Activated B cell treated with CpG ODN at 0.5 μM for 24 hours (primary cell): ENCODE measurements at regions of chr11 and their contacts with region 1.

Region 1: DNA sequence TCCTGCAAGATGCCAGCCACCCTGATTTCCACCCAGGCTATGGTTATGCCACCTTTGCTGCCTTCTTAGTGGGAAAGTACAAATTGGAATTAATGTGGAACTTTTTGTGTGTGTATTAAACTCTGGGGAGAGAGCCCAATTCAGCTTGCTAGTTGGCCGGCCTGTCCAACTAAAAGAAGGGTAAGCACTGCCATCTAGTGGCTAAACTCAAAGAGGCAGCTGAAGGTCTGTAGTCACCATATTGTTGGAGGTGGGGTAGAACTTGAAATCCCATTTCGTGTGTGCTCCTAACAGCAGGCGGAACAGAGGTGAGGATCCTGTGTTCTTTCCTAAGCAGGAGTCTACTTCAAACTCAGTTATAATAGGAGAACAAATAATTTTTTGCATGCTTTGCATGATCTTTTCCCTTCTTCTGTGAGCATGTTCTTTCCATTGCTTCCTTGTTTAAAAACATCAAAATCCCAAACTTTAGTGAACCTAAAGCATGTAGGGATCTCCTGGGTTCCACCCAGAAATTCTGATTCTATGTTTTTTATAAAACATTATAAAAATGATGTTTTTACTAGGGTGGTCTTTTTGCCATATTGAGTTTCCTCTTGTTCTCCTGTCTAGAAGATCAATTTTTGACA is 138.8 kb upstream of the SORL1-AS1 start:
- DNase-seq: no peak
- ATAC-seq: peak; percentile 39
- H3K4me3 Mint-ChIP-seq: peak overlapping the region; percentile 49
- H3K27ac Mint-ChIP-seq: peak overlapping the region; percentile 93
- H3K4me1 Mint-ChIP-seq: peaks cover 36% of the 10 kb centered on the region
- H3K27me3 Mint-ChIP-seq: no peaks in the 10 kb centered on the region
- CTCF ChIP-seq: peak; percentile 77

Region 2: GRCh38 chr11:120511116-120511819 is 1080.3 kb before region 1 on chr11 and contains the start of gene GRIK4:
- CTCF ChIA-PET with region 1: interaction called, 5 read pairs
- POLR2A ChIA-PET with region 1: no interaction called
- intact Hi-C with region 1: loop called (anchors 1 kb)
- DNase-seq: peak; percentile 81
- ATAC-seq: peak; percentile 94
- H3K4me3 Mint-ChIP-seq: peak within 1 kb of the TSS; percentile 58
- H3K27ac Mint-ChIP-seq: no peak within 1 kb of the TSS
- H3K4me1 Mint-ChIP-seq: peaks cover 3% of the 10 kb centered on the region
- H3K27me3 Mint-ChIP-seq: peaks cover 51% of the 10 kb centered on the region
- CTCF ChIP-seq: peak; percentile 20
- total RNA-seq, gene GRIK4: 0.05 TPM in 1 of 2 replicates, not detected in the other

Region 3: GRCh38 chr11:121249039-121249663 is 342.4 kb before region 1 on chr11:
- CTCF ChIA-PET with region 1: interaction called, 11 read pairs
- POLR2A ChIA-PET with region 1: no interaction called
- intact Hi-C with region 1: loop called (anchors 1 kb)
- DNase-seq: no peak
- ATAC-seq: peak; percentile 73
- H3K4me3 Mint-ChIP-seq: no peak overlapping the region
- H3K27ac Mint-ChIP-seq: no peak overlapping the region
- H3K4me1 Mint-ChIP-seq: peaks cover 3% of the 10 kb centered on the region
- H3K27me3 Mint-ChIP-seq: peaks cover 4% of the 10 kb centered on the region
- CTCF ChIP-seq: peak; percentile 72

Region 4: DNA sequence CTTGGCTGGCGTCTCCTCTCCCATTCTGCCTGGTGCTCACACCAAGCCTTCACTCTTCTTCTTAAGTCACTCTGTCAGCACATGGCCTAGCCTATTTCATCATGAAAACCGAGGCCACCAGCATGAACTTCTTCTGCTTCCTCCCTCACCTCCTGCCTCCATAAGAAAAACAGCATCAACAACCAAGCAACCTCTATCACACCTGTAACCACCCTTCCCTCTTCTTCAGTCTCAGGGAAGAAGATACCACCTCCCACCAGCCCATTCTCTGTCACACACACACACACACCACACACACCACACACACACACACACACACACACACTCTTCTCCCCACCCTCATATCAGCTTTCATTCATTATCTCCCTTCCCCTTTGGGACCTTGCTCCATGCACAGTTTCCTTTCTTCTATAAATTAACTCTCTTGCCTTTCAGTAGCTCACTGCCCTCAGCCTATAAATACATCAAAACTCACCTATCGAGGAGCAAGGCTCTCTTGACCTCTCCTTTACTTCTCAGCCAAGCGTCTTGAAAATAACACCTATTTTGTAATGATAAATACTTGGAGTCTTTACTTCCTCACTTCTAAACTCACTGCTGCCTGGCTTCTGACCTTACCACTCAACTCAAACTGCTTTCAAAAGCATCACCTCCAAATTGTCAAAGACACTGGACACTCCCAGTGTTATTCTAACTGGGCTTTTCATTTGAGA is 262.4 kb before region 1 on chr11:
- CTCF ChIA-PET with region 1: interaction called, 12 read pairs
- POLR2A ChIA-PET with region 1: no interaction called
- intact Hi-C with region 1: no loop called
- DNase-seq: no peak
- ATAC-seq: peak; percentile 25
- H3K4me3 Mint-ChIP-seq: no peak overlapping the region
- H3K27ac Mint-ChIP-seq: no peak overlapping the region
- H3K4me1 Mint-ChIP-seq: peaks cover 3% of the 10 kb centered on the region
- H3K27me3 Mint-ChIP-seq: peaks cover 5% of the 10 kb centered on the region
- CTCF ChIP-seq: no peak

Region 5: DNA sequence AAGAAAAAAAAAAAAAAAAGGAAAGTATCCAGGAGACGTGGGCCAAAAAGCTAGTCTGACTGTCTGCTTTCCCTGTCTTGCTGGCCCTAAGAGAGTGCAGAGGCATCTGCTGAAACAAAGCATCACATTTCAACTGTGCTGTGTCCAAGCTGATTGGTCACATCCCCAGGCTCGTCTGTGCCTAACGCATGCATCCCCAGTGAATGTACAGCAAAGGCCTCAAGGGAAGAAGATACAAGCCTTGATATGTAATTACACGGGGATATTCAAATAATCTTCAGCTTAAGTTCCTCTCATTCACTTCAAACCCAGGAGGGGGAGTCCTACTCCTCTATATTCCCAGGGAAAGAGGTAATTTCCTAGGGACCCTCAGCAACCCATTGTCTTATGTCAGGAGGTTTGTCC is 144.8 kb before region 1 on chr11:
- CTCF ChIA-PET with region 1: interaction called, 12 read pairs
- POLR2A ChIA-PET with region 1: interaction called, 20 read pairs
- intact Hi-C with region 1: loop called (anchors 1 kb)
- DNase-seq: no peak
- ATAC-seq: peak; percentile 49
- H3K4me3 Mint-ChIP-seq: peak overlapping the region; percentile 66
- H3K27ac Mint-ChIP-seq: peak overlapping the region; percentile 80
- H3K4me1 Mint-ChIP-seq: peaks cover 76% of the 10 kb centered on the region
- H3K27me3 Mint-ChIP-seq: no peaks in the 10 kb centered on the region
- CTCF ChIP-seq: no peak

Region 6: GRCh38 chr11:121534131-121535093 is 57.1 kb before region 1 on chr11:
- CTCF ChIA-PET with region 1: interaction called, 3 read pairs
- POLR2A ChIA-PET with region 1: no interaction called
- intact Hi-C with region 1: loop called (anchors 2 kb)
- DNase-seq: no peak
- ATAC-seq: no peak
- H3K4me3 Mint-ChIP-seq: no peak overlapping the region
- H3K27ac Mint-ChIP-seq: no peak overlapping the region
- H3K4me1 Mint-ChIP-seq: peaks cover 36% of the 10 kb centered on the region
- H3K27me3 Mint-ChIP-seq: no peaks in the 10 kb centered on the region
- CTCF ChIP-seq: no peak